Left cardiac atrium (tissue), 4 donors: ENCODE measurements at regions of chr6 and their contacts with region 1.

Region 1: DNA sequence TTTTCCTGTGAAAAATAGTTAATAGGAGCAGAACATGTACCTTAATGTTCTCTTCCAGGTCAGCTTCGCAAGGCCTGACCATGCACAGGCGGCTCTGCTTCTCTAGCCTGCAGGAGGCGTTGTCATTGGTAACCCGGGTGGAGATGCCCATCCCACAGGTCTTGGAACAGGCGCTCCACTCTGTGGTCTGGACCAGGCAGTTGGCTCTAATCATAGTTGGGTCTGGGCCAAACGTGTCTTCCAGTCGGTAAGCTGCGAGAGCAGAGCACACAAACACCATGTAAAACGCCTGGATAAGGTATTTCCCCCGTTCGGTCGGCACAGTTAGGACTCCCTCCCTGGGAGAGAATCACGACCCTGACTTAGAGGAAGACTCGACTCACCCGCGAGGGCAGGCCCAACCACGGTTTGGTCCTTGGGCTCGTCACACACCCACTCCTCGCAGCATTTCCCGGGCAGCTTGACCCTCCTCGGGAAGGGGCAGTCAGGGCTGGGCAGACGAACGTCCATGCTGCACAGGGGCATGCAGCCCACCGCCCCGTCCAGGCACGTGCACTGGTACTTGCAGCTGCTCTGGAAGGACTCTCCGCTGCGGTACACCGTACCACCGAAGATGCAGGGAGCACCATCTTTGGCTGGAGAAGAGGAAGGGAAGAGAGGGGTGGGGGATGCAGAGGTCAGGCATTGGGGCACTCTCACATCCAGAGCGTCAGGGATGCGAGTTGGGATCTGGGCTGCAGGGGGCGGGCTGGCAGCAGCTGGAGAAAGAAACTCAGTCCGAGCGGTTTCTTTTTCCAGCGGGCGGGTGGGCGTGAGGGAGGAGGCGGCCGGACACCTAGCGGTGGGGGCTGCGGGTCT is 1.0 kb downstream of the CCN2 start:
- DNase-seq: peak; percentile 78
- ATAC-seq: peak; percentile 68 to 78

Region 2: GRCh38 chr6:131782764-131783163 is 167.4 kb before region 1 on chr6:
- intact Hi-C with region 1: no loop called
- DNase-seq: no peak
- ATAC-seq: no peak

Region 3: GRCh38 chr6:132063738-132064137 is 113.6 kb after region 1 on chr6:
- intact Hi-C with region 1: loop called in 1 of 2 experiments (anchors 10 kb)
- DNase-seq: peak; percentile 32
- ATAC-seq: peak in 1 of 2 donors; percentile 89

Region 4: GRCh38 chr6:132131758-132132157 is 181.6 kb after region 1 on chr6:
- intact Hi-C with region 1: loop called (anchors 5 to 10 kb)
- DNase-seq: peak; percentile 59
- ATAC-seq: peak; percentile 70 to 95

Region 5: DNA sequence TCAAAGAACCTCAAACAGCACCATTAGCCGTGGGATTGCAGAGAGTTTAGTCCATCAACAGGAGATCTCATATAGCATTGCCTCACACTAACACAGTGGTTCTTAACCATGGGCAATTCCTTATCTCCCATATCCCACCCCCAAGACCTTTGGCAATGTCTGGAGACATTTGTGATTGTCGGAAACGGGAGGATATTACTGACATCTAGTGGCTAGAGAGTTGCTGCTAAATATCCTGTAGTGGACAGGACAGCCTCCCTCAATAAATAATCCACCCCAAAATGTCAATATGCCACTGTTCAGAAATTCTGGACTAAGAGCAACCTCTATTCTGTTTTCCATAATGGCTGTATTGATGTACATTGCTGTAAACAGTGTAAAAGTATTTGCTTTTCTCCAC is 211.1 kb after region 1 on chr6:
- intact Hi-C with region 1: loop called in 1 of 2 experiments (anchors 2 kb)
- DNase-seq: no peak
- ATAC-seq: peak; percentile 63 to 70